Esophagus muscularis mucosa (tissue), 4 donors: ENCODE measurements at regions of chr20 and their contacts with region 1.

Region 1: DNA sequence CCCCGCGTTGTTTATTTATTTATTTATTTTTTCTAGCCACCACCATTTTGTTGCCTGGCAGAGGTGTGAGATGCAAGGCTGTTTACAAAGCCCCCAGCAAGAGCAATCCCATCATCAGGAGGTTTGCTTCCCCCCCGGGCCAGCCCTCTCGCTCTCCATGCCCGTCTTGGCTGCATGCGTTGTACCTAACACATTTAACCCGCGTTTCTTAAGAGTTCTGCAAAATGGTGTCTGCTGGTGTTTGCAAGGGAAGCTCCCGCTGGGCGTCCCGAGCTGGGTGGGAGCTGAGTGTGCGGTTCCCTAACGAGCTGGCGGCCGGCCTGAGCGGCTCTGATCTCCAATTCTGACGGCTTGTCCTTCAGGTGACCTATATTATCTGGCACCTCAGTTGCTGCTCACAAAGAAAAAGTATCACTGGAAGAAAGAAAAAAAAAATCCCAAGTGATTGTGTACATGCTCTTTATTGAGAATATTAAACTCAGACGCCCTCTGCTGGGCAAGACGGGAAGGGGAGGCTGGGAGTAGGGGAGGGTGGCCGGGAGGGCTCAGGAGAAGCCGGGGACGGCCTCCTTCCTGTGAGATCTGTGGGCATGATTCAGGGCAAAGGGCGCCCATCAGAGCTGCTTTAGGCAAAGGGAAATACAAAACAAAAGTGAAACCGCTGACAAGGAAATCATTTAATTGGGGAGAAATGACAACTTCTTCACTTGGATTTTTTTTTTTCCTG is 154.8 kb downstream of the BCAS1 start:
- DNase-seq: peak; percentile 98
- H3K4me3 ChIP-seq: peak overlapping the region; percentile 62 to 83 (median 68)
- H3K27ac ChIP-seq: peak overlapping the region; percentile 83 to 85 (median 84)
- H3K4me1 ChIP-seq: peaks cover 33 to 36% (median 34%) of the 10 kb centered on the region in 4 donors
- H3K27me3 ChIP-seq: no peaks in the 10 kb centered on the region
- CTCF ChIP-seq: peak; percentile 89 to 96 (median 96)
- EP300 ChIP-seq: no peak
- POLR2A ChIP-seq: no peak

Region 2: GRCh38 chr20:53875433-53875832 is 40.2 kb before region 1 on chr20:
- intact Hi-C with region 1: loop called (anchors 5 kb)
- DNase-seq: no peak
- H3K4me3 ChIP-seq: no peak overlapping the region
- H3K27ac ChIP-seq: no peak overlapping the region
- H3K4me1 ChIP-seq: peaks cover 8 to 21% (median 15%) of the 10 kb centered on the region in 4 donors
- H3K27me3 ChIP-seq: no peaks in the 10 kb centered on the region
- CTCF ChIP-seq: no peak
- EP300 ChIP-seq: no peak
- POLR2A ChIP-seq: no peak

Region 3: GRCh38 chr20:53980031-53980465 is 64.4 kb after region 1 on chr20:
- intact Hi-C with region 1: no loop called
- DNase-seq: no peak
- H3K4me3 ChIP-seq: no peak overlapping the region
- H3K27ac ChIP-seq: no peak overlapping the region
- H3K4me1 ChIP-seq: no peaks in the 10 kb centered on the region
- H3K27me3 ChIP-seq: peaks cover 0 to 7% (median 0%) of the 10 kb centered on the region in 4 donors
- CTCF ChIP-seq: no peak
- EP300 ChIP-seq: no peak
- POLR2A ChIP-seq: no peak